Activated CD4-positive, alpha-beta T cell treated with anti-CD3 and anti-CD28 coated beads, Interleukin-2, amount 10 ng/mL, durations not matched to agents 24 days and 14 days (primary cell): ENCODE measurements at regions of chr15 and their contacts with region 1.

Region 1: DNA sequence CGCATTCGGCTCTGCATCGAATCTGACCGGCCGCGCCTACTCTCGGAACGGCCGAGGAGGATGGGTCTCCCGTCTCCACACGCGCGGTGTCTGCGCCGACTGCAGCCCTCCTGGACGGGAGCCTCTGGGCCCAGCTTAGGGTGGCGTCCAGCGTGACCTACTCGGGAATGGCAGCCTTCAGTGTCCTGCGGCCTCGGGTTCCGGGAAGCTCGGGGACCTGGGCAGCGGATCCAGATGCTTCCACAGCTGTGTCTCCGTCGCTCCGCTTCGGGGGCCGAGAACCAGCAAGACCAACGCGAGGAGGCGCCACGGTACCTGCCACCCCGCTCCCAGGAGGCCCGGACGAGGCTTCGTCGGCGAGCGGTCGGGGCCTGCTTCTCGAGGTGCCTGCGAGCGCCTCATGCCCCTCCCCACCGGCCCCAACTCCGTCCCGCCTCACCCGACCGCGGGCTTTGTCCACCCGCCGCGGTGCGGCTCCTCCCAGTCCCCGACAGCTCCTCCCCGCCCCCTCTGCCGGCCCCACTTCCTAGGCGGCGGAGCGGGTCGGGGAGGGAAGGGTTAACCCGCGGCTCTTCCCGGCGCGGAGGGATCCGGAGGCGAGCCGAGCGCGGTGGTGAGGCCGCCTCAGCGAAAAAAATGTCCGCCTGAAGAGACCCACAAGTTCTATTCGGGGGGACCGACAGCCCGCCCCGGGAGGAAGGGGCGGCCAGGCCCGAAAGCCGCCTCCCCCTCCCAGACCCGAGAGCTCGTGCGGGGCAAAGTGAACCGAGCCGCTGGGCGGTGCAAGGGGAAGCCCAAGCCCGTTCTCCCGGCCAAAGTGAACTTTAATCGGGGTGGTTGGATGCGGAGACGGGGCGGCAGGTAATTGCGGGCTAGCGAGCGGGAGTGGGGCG is at the start of gene TCF12:
- DNase-seq: peak; percentile 97
- H3K4me3 Mint-ChIP-seq: peak within 1 kb of the TSS; percentile 95
- H3K27ac Mint-ChIP-seq: peak within 1 kb of the TSS; percentile 84
- H3K4me1 Mint-ChIP-seq: peaks cover 26% of the 10 kb centered on the region
- H3K27me3 Mint-ChIP-seq: no peaks in the 10 kb centered on the region
- total RNA-seq, gene TCF12: 78.6 and 89.1 TPM in 2 replicates

Region 2: DNA sequence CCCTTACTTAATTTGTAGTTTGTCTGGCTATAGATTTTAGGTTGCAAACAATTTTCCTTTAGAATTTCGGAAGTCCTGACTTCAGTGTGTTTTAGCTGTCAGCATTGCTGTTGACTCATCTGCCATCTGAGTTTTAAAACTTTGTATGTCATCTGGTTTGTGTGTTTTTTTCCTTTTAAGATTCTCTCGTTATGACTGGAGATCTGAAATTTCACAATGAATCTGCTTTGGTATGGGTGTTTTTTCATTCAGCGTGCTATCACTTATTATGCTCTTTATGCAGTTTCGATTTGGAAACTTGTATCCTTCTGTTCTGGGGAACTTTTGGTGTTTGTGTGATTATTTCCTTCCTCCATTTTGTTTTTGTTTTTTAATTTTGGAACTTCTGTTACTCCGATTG is 131.3 kb before region 1 on chr15:
- intact Hi-C with region 1: loop called (anchors 1 kb)
- DNase-seq: no peak
- H3K4me3 Mint-ChIP-seq: peak overlapping the region; percentile 42
- H3K27ac Mint-ChIP-seq: peak overlapping the region; percentile 74
- H3K4me1 Mint-ChIP-seq: peaks cover 15% of the 10 kb centered on the region
- H3K27me3 Mint-ChIP-seq: no peaks in the 10 kb centered on the region

Region 3: DNA sequence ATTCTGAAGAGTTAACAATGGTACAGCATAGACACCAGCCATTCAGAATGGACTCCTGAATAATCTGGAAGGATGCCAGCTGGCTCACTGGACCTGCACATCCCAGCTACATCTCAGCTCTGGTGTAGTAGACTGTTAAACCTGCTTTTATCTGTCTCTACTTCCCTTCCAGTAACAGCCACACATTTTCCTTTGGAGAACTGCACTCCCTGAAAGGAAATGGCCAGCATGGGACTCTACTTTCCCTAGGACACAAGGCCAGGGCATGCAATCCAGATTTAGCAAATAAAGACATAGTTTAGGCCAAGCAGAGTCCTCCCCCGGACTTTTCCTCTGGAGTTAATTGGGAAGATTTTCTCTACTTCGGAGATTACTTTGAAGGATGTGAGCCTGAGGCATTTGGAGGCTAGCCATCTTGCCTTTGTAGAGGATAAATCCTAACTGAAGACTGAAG is 82.5 kb before region 1 on chr15:
- intact Hi-C with region 1: no loop called
- DNase-seq: no peak
- H3K4me3 Mint-ChIP-seq: no peak overlapping the region
- H3K27ac Mint-ChIP-seq: no peak overlapping the region
- H3K4me1 Mint-ChIP-seq: peaks cover 6% of the 10 kb centered on the region
- H3K27me3 Mint-ChIP-seq: peaks cover 3% of the 10 kb centered on the region

Region 4: GRCh38 chr15:56964182-56964581 is 45.9 kb after region 1 on chr15:
- intact Hi-C with region 1: loop called (anchors 5 kb)
- DNase-seq: no peak
- H3K4me3 Mint-ChIP-seq: peak overlapping the region; percentile 2
- H3K27ac Mint-ChIP-seq: peak overlapping the region; percentile 20
- H3K4me1 Mint-ChIP-seq: peaks cover 25% of the 10 kb centered on the region
- H3K27me3 Mint-ChIP-seq: no peaks in the 10 kb centered on the region

Region 5: GRCh38 chr15:57133127-57133968 is 215.1 kb after region 1 on chr15:
- intact Hi-C with region 1: loop called (anchors 5 kb)
- DNase-seq: no peak
- H3K4me3 Mint-ChIP-seq: peak overlapping the region; percentile 55
- H3K27ac Mint-ChIP-seq: peak overlapping the region; percentile 86
- H3K4me1 Mint-ChIP-seq: peaks cover 30% of the 10 kb centered on the region
- H3K27me3 Mint-ChIP-seq: no peaks in the 10 kb centered on the region